Breast epithelium (tissue), 4 donors: ENCODE measurements at regions of chr10 and their contacts with region 1.

Region 1: GRCh38 chr10:23768270-23768669 is 329.4 kb downstream of the OTUD1 start:
- DNase-seq: no peak
- H3K4me3 ChIP-seq: no peak overlapping the region
- H3K27ac ChIP-seq: no peak overlapping the region
- H3K4me1 ChIP-seq: no peaks in the 10 kb centered on the region
- H3K27me3 ChIP-seq: no peaks in the 10 kb centered on the region
- CTCF ChIP-seq: no peak
- POLR2A ChIP-seq: no peak

Region 2: DNA sequence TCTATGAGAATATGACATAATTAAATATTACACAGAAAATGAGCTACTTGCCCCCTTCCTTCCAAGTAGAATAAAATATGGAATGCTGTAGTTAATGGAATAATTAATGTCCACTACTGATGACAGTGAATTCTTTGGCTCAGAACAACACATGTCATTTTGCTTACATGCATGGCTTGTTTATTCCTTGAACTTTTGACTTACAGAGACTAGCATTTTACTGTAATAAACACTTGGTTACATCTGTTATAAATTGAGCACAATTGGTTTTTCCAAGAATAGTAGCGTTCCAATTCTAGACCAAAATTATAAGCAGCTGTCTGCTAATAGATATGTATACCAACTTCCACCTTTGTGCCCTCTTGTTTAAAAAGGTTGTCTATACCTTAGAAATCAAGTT is 42.7 kb before region 1 on chr10:
- intact Hi-C with region 1: no loop called
- DNase-seq: no peak
- H3K4me3 ChIP-seq: no peak overlapping the region
- H3K27ac ChIP-seq: no peak overlapping the region
- H3K4me1 ChIP-seq: no peaks in the 10 kb centered on the region
- H3K27me3 ChIP-seq: no peaks in the 10 kb centered on the region
- CTCF ChIP-seq: no peak
- POLR2A ChIP-seq: no peak

Region 3: DNA sequence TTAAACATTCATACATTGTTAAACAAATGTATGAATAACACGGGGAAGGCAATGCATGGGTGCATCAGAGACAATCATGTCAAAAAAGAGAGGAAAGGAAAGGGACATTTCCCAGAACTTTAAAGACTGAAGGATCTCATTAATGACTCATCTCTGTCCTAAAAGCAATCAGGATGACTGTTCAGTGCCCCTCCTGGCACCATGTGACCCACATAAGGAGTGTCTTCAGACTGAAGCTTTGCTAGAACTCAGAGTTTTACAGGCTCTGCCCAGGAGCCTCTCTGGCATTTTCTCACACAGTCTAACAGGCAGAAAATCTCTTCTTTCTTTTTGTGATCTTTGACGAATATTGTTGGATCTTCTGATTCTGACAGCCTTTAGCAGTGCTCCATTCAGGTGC is 14.1 kb before region 1 on chr10:
- intact Hi-C with region 1: loop called (anchors 1 kb)
- DNase-seq: no peak
- H3K4me3 ChIP-seq: no peak overlapping the region
- H3K27ac ChIP-seq: no peak overlapping the region
- H3K4me1 ChIP-seq: no peaks in the 10 kb centered on the region
- H3K27me3 ChIP-seq: no peaks in the 10 kb centered on the region
- CTCF ChIP-seq: no peak
- POLR2A ChIP-seq: no peak